Activated CD4-positive, alpha-beta T cell treated with anti-CD3 and anti-CD28 coated beads for 36 hours (primary cell): ENCODE measurements at regions of chr12 and their contacts with region 1.

Region 1: DNA sequence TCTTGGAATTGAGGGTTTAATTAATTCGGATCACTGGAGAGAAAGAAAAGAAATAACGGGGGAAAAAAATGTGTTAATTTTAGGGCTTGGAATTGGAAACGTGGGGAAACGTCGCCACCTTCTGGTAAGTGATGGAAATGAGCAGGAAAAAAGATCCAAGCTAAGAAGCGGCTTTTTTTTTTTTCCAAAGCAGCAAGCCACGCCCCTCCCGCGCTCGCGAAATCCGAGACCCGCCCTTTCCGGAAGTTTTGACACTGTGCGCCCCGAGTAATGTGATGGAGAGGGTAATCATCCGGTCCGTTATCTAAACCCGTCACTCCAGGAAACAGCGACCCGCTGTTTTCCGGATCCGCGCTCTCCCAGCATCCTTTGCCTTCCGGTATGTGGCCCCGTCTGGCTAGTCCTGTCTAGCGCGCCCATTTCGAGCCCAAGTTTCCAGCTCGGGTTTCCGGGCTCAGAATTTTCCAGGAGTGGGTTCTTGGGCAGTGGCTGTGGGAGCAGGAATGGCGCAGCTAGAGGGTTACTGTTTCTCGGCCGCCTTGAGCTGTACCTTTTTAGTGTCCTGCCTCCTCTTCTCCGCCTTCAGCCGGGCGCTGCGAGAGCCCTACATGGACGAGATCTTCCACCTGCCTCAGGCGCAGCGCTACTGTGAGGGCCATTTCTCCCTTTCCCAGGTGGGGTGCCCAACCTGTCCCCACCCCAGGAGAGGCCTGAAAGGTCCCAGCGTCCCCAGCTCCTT is at the start of gene ALG10B:
- DNase-seq: peak; percentile 94
- ATAC-seq: peak; percentile 100
- H3K4me3 Mint-ChIP-seq: peak within 1 kb of the TSS; percentile 89
- H3K27ac Mint-ChIP-seq: peak within 1 kb of the TSS; percentile 95
- H3K4me1 Mint-ChIP-seq: peaks cover 20% of the 10 kb centered on the region
- H3K27me3 Mint-ChIP-seq: no peaks in the 10 kb centered on the region
- total RNA-seq, gene ALG10B: 14.2 to 15.3 TPM

Region 2: GRCh38 chr12:38138225-38139221 is 178.0 kb before region 1 on chr12:
- CTCF ChIA-PET with region 1: interaction called, 8 read pairs
- POLR2A ChIA-PET with region 1: no interaction called
- intact Hi-C with region 1: loop called (anchors 1 kb)
- DNase-seq: peak; percentile 76
- ATAC-seq: peak; percentile 66
- H3K4me3 Mint-ChIP-seq: peak overlapping the region; percentile 61
- H3K27ac Mint-ChIP-seq: peak overlapping the region; percentile 27
- H3K4me1 Mint-ChIP-seq: peaks cover 6% of the 10 kb centered on the region
- H3K27me3 Mint-ChIP-seq: peaks cover 10% of the 10 kb centered on the region